ENCODE measurements at regions of chr22 and their contacts with region 1.

Region 1: DNA sequence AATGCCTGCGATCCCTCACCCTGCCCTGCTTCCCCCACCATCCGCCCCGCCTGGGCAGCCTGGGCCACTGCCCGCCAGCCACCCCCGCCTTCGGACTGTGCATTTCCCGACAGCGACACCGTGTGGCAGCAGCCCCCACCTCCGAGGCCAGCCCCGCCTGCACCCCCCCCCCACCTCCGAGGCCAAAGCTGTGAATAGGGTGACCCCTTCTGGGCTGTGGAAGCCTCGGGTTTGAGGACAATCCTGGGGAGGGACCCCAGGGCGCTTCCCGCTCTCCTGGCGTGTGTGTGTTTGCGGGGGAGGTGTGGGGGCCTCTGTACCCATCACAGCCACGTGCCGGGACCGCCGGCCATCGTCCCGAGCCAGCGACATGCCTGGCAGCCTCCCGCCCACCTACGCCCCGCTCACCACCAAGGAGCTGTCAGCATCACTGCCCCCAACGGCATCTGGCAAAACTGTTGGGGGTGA is 33.8 kb upstream of the PPARA start:
- DNase-seq: peak; percentile 91
- ATAC-seq: peak; percentile 98
- H3K4me3 ChIP-seq: no peak overlapping the region
- H3K4me3 Mint-ChIP-seq: no peak overlapping the region
- H3K27ac ChIP-seq: no peak overlapping the region
- H3K27ac Mint-ChIP-seq: no peak overlapping the region
- H3K4me1 ChIP-seq: peaks cover 0 to 8% of the 10 kb centered on the region in 2 donors
- H3K4me1 Mint-ChIP-seq: no peaks in the 10 kb centered on the region
- H3K27me3 ChIP-seq: no peaks in the 10 kb centered on the region
- H3K27me3 Mint-ChIP-seq: no peaks in the 10 kb centered on the region
- CTCF ChIP-seq: peak; percentile 87

Region 2: GRCh38 chr22:45994491-45995404 is 121.8 kb before region 1 on chr22:
- CTCF ChIA-PET with region 1: interaction called, 533 read pairs
- POLR2A ChIA-PET with region 1: interaction called, 4 read pairs
- intact Hi-C with region 1: loop called (anchors 1 kb)
- DNase-seq: peak; percentile 75
- ATAC-seq: peak; percentile 65
- H3K4me3 ChIP-seq: no peak overlapping the region
- H3K4me3 Mint-ChIP-seq: no peak overlapping the region
- H3K27ac ChIP-seq: no peak overlapping the region
- H3K27ac Mint-ChIP-seq: no peak overlapping the region
- H3K4me1 ChIP-seq: peaks cover 13 to 29% of the 10 kb centered on the region in 2 donors
- H3K4me1 Mint-ChIP-seq: peaks cover 32% of the 10 kb centered on the region
- H3K27me3 ChIP-seq: peaks cover 0 to 7% (median 0%) of the 10 kb centered on the region in 4 experiments
- H3K27me3 Mint-ChIP-seq: no peaks in the 10 kb centered on the region
- CTCF ChIP-seq: peak; percentile 94

Region 3: DNA sequence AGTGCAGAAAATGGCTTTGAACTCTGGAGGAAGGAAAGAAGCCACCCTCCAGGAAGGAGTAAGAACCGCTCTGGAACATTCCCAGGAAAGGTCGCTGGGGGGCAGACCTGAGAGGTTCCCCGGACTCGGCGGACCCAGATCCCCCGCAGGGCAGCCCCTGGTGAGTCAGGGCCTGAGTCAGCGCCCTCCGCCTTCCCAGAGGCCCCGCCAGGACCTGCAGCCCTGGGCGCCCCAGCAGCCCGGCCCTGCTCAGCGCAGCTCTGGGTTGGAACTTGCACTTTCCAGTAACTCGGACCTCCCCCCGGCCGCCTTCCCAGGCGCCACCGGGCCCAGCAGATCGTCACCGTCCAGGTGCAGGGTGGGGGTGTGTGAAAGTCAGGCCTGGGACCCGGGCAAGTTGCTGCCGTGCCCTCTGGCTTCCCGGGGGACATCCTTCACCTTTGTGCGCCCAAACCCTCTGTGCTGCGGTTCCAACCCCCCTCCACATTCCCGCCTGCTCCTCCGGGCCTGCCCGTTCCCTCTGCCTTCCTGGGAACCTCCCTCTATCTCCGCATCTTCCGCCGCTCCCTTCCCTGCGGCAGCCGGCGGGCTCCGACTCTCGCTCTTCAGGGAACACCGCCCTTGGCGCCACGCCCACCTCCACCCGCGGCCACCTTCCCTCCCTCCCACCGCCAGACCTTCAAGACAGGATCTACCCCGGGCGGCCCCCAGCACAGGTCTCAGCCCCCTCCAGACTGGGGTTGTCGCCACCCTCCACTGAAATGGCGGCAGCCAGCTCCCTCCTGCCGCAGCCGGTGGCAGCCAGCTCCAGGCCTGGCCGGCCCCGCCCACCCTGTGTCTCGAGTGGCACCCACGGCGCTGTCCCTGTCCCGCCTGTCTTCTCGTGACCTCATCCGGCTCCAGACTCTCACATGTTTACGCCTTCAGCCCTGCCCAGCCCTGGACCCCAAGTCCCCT is 102.8 kb before region 1 on chr22:
- CTCF ChIA-PET with region 1: interaction called, 533 read pairs
- POLR2A ChIA-PET with region 1: interaction called, 7 read pairs
- intact Hi-C with region 1: loop called (anchors 1 kb)
- DNase-seq: peak; percentile 81
- ATAC-seq: peak; percentile 95
- H3K4me3 ChIP-seq: peak overlapping the region; percentile 8 to 88 (median 83)
- H3K4me3 Mint-ChIP-seq: peak overlapping the region; percentile 93
- H3K27ac ChIP-seq: peak overlapping the region; percentile 90 to 91
- H3K27ac Mint-ChIP-seq: peak overlapping the region; percentile 92
- H3K4me1 ChIP-seq: peaks cover 3 to 17% of the 10 kb centered on the region in 2 donors
- H3K4me1 Mint-ChIP-seq: peaks cover 10% of the 10 kb centered on the region
- H3K27me3 ChIP-seq: peaks cover 0 to 3% (median 0%) of the 10 kb centered on the region in 4 experiments
- H3K27me3 Mint-ChIP-seq: no peaks in the 10 kb centered on the region
- CTCF ChIP-seq: peak; percentile 75

Region 4: DNA sequence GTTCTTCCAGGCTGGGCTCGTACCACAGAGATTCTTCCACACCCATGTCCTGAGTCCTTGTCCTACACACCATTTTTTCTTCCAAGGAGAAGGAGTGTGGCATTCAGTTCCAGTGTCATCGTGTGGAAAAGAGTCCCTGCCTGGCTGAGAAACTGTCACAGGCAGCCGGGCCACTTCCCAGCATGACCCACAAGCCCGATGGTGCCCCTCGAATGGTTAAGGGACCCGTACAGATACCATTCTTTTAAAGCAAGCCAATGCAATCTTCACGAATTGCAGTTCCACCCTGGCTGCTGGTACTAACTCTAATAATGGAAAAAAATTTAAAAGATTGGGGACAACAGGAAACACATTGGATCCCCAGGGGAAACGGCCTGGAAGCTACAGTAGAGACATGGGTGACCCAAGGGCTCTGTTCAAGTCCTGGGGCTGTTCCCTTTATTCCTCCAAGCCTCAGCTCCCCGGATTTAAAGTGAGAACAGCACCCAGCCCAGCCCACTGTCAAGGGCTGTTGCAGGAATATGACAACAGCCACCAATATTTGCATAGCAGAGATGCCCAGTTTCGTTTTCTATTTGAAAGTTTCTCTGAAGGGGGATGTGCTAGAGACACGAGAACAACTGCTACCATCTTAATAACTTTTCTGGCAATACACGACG is 58.6 kb before region 1 on chr22:
- CTCF ChIA-PET with region 1: interaction called, 3 read pairs
- POLR2A ChIA-PET with region 1: no interaction called
- intact Hi-C with region 1: loop called (anchors 5 kb)
- DNase-seq: peak; percentile 83
- ATAC-seq: peak; percentile 70
- H3K4me3 ChIP-seq: peak overlapping the region in 2 of 5 experiments; percentile 18 to 28
- H3K4me3 Mint-ChIP-seq: peak overlapping the region; percentile 62
- H3K27ac ChIP-seq: peak overlapping the region; percentile 57 to 89
- H3K27ac Mint-ChIP-seq: peak overlapping the region; percentile 97
- H3K4me1 ChIP-seq: peaks cover 31 to 49% of the 10 kb centered on the region in 2 donors
- H3K4me1 Mint-ChIP-seq: peaks cover 51% of the 10 kb centered on the region
- H3K27me3 ChIP-seq: no peaks in the 10 kb centered on the region
- H3K27me3 Mint-ChIP-seq: no peaks in the 10 kb centered on the region
- CTCF ChIP-seq: no peak

Region 5: GRCh38 chr22:46309526-46310085 is 193.1 kb after region 1 on chr22:
- CTCF ChIA-PET with region 1: interaction called, 228 read pairs
- POLR2A ChIA-PET with region 1: no interaction called
- intact Hi-C with region 1: no loop called
- DNase-seq: no peak
- ATAC-seq: no peak
- H3K4me3 ChIP-seq: no peak overlapping the region
- H3K4me3 Mint-ChIP-seq: no peak overlapping the region
- H3K27ac ChIP-seq: no peak overlapping the region
- H3K27ac Mint-ChIP-seq: no peak overlapping the region
- H3K4me1 ChIP-seq: no peaks in the 10 kb centered on the region
- H3K4me1 Mint-ChIP-seq: no peaks in the 10 kb centered on the region
- H3K27me3 ChIP-seq: no peaks in the 10 kb centered on the region
- H3K27me3 Mint-ChIP-seq: no peaks in the 10 kb centered on the region
- CTCF ChIP-seq: no peak

Measured in B cell (primary cell).